PC-3 (cell line): ENCODE measurements at regions of chr17 and their contacts with region 1.

Region 1: GRCh38 chr17:63984651-63985386 is 12.1 kb upstream of the SCN4A start:
- DNase-seq: peak; percentile 87
- ATAC-seq: peak; percentile 92
- H3K4me3 ChIP-seq: no peak overlapping the region
- H3K27ac ChIP-seq: no peak overlapping the region
- H3K4me1 ChIP-seq: peaks cover 12% of the 10 kb centered on the region
- H3K27me3 ChIP-seq: no peaks in the 10 kb centered on the region
- CTCF ChIP-seq: no peak

Region 2: GRCh38 chr17:63974594-63975192 is 10.1 kb before region 1 on chr17:
- CTCF ChIA-PET with region 1: interaction called, 4 read pairs
- POLR2A ChIA-PET with region 1: interaction called, 8 read pairs
- intact Hi-C with region 1: loop called (anchors 1 kb)
- DNase-seq: peak; percentile 95
- ATAC-seq: peak; percentile 89
- H3K4me3 ChIP-seq: peak overlapping the region; percentile 53
- H3K27ac ChIP-seq: peak overlapping the region; percentile 95
- H3K4me1 ChIP-seq: peaks cover 29% of the 10 kb centered on the region
- H3K27me3 ChIP-seq: no peaks in the 10 kb centered on the region
- CTCF ChIP-seq: no peak